ENCODE measurements at regions of chr5 and their contacts with region 1.

Region 1: DNA sequence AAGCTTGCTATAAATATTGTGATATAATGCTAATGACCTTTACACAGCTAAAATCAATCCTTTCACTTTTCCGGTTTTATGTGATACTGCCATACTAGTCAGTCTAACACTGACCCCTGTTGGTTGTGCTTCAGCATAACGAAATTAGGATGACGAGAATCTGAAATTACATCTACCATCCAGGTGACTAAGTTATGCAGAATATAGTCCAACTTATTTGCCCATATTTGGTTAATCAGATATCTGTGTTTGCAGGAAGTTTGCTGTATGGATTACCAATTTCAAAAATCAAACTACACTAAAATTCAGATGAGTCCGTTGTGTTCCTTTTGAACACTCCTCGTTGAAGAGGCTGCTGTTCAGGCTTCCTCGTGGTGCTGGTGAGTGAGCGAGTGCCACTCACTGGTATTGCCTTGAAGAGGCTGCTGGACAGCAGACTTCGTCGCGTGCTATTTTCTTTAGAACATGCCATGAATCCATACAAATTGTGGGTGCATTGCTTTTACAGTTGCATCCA is 32.5 kb downstream of the TENT4A start:
- DNase-seq: no peak
- ATAC-seq: peak; percentile 82
- H3K4me3 Mint-ChIP-seq: no peak overlapping the region
- H3K27ac Mint-ChIP-seq: no peak overlapping the region
- H3K4me1 Mint-ChIP-seq: peaks cover 6% of the 10 kb centered on the region
- H3K27me3 Mint-ChIP-seq: no peaks in the 10 kb centered on the region
- CTCF ChIP-seq: peak; percentile 66

Region 2: GRCh38 chr5:6615034-6615815 is 130.5 kb before region 1 on chr5:
- CTCF ChIA-PET with region 1: interaction called, 13 read pairs
- POLR2A ChIA-PET with region 1: interaction called, 3 read pairs
- intact Hi-C with region 1: no loop called
- DNase-seq: no peak
- ATAC-seq: no peak
- H3K4me3 Mint-ChIP-seq: no peak overlapping the region
- H3K27ac Mint-ChIP-seq: peak overlapping the region; percentile 55
- H3K4me1 Mint-ChIP-seq: peaks cover 36% of the 10 kb centered on the region
- H3K27me3 Mint-ChIP-seq: no peaks in the 10 kb centered on the region
- CTCF ChIP-seq: no peak

Region 3: GRCh38 chr5:6728011-6728794 is 17.6 kb before region 1 on chr5:
- CTCF ChIA-PET with region 1: interaction called, 13 read pairs
- POLR2A ChIA-PET with region 1: no interaction called
- intact Hi-C with region 1: no loop called
- DNase-seq: peak; percentile 28
- ATAC-seq: peak; percentile 35
- H3K4me3 Mint-ChIP-seq: no peak overlapping the region
- H3K27ac Mint-ChIP-seq: peak overlapping the region; percentile 71
- H3K4me1 Mint-ChIP-seq: peaks cover 91% of the 10 kb centered on the region
- H3K27me3 Mint-ChIP-seq: no peaks in the 10 kb centered on the region
- CTCF ChIP-seq: no peak

Region 4: DNA sequence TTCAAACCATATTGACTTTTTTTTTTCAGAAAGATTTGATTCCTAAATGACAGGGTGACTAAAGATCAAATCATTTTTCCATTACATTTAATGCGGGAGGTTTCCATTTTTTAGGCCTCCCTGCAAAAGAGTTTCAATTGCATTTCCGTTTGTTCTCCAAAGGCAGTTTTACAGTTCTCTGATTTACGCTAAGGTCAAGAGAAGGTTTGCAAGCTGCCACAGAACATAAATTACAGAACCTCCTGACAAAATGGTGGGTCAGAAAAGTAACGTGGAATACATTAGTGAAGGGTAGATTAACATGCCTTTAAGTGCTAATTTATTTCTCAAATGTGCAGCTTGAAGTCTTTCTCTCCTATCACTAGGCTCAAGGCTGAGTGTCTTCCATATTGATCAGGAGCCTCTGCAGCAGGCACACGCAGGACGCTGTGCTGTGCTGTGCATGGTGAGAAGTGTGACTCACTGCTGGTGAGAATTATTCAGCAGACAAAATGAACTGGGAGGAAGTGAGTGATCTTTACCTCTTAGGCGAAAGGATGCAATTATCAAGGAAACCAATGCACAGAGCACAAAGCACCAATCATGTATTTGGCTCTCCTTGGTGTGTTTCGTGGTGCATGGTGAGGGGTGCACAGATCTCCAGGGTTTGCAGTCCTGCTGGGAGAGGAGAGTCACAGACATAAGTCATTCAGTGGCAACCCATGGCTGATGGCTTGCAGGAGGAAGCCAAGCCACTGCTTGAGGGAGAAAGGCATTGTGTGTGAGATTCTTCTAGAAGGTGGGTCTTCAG is 103.7 kb after region 1 on chr5:
- CTCF ChIA-PET with region 1: no interaction called
- POLR2A ChIA-PET with region 1: no interaction called
- intact Hi-C with region 1: no loop called
- DNase-seq: peak; percentile 24
- ATAC-seq: peak; percentile 93
- H3K4me3 Mint-ChIP-seq: no peak overlapping the region
- H3K27ac Mint-ChIP-seq: no peak overlapping the region
- H3K4me1 Mint-ChIP-seq: peaks cover 9% of the 10 kb centered on the region
- H3K27me3 Mint-ChIP-seq: no peaks in the 10 kb centered on the region
- CTCF ChIP-seq: no peak